ENCODE measurements at regions of chr2 and their contacts with region 1.

Region 1: GRCh38 chr2:226799181-226799975 is at the start of gene IRS1:
- DNase-seq: peak; percentile 59
- ATAC-seq: peak; percentile 47
- H3K4me3 Mint-ChIP-seq: peak within 1 kb of the TSS; percentile 92
- H3K27ac Mint-ChIP-seq: peak within 1 kb of the TSS; percentile 77
- H3K4me1 Mint-ChIP-seq: peaks cover 38% of the 10 kb centered on the region
- H3K27me3 Mint-ChIP-seq: peaks cover under 1% of the 10 kb centered on the region
- CTCF ChIP-seq: no peak
- total RNA-seq, gene IRS1: 3.2 and 3.6 TPM in 2 replicates

Region 2: GRCh38 chr2:225668606-225669266 is 1130.6 kb before region 1 on chr2:
- CTCF ChIA-PET with region 1: interaction called, 15 read pairs
- POLR2A ChIA-PET with region 1: no interaction called
- intact Hi-C with region 1: loop called (anchors 1 kb)
- DNase-seq: no peak
- ATAC-seq: peak; percentile 79
- H3K4me3 Mint-ChIP-seq: no peak overlapping the region
- H3K27ac Mint-ChIP-seq: no peak overlapping the region
- H3K4me1 Mint-ChIP-seq: no peaks in the 10 kb centered on the region
- H3K27me3 Mint-ChIP-seq: peaks cover 5% of the 10 kb centered on the region
- CTCF ChIP-seq: peak; percentile 29

Region 3: GRCh38 chr2:226030788-226031646 is 768.4 kb before region 1 on chr2:
- CTCF ChIA-PET with region 1: no interaction called
- POLR2A ChIA-PET with region 1: interaction called, 3 read pairs
- intact Hi-C with region 1: loop called (anchors 10 kb)
- DNase-seq: no peak
- ATAC-seq: no peak
- H3K4me3 Mint-ChIP-seq: peak overlapping the region; percentile 70
- H3K27ac Mint-ChIP-seq: no peak overlapping the region
- H3K4me1 Mint-ChIP-seq: peaks cover 17% of the 10 kb centered on the region
- H3K27me3 Mint-ChIP-seq: peaks cover 38% of the 10 kb centered on the region
- CTCF ChIP-seq: no peak

Region 4: GRCh38 chr2:226304308-226304707 is 495.1 kb before region 1 on chr2:
- CTCF ChIA-PET with region 1: interaction called, 3 read pairs
- POLR2A ChIA-PET with region 1: no interaction called
- intact Hi-C with region 1: loop called (anchors 2 kb)
- DNase-seq: no peak
- ATAC-seq: no peak
- H3K4me3 Mint-ChIP-seq: no peak overlapping the region
- H3K27ac Mint-ChIP-seq: no peak overlapping the region
- H3K4me1 Mint-ChIP-seq: peaks cover 20% of the 10 kb centered on the region
- H3K27me3 Mint-ChIP-seq: no peaks in the 10 kb centered on the region
- CTCF ChIP-seq: no peak

Region 5: GRCh38 chr2:226756129-226756528 is 43.2 kb before region 1 on chr2:
- CTCF ChIA-PET with region 1: no interaction called
- POLR2A ChIA-PET with region 1: no interaction called
- intact Hi-C with region 1: no loop called
- DNase-seq: no peak
- ATAC-seq: no peak
- H3K4me3 Mint-ChIP-seq: no peak overlapping the region
- H3K27ac Mint-ChIP-seq: no peak overlapping the region
- H3K4me1 Mint-ChIP-seq: peaks cover 6% of the 10 kb centered on the region
- H3K27me3 Mint-ChIP-seq: no peaks in the 10 kb centered on the region
- CTCF ChIP-seq: no peak

Region 6: DNA sequence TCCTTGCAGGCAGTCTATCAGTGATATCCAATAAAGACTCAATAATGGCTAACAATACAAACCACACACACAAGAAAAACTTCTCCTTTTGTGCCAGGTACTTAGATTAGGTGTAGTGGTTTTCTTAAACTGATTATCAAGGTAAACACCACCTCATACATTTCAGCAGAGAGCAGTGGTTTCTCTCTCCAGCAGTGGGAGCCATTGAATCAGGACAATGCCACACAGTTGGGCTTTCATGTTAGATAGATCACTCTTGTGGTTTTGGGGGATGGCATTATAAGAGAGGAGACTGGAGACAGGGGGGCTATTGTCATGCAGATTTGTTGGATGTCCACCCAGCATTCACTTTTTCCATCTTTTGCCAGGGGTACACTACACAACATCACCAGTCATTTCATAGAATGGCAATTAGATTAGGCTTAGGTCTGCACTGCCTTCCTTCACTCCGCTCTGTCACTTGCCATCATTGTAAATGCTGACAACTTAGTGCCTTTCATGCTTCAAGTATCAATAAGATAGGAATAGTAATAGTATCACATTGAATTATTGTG is 13.8 kb after region 1 on chr2:
- CTCF ChIA-PET with region 1: interaction called, 9 read pairs
- POLR2A ChIA-PET with region 1: interaction called, 3 read pairs
- intact Hi-C with region 1: loop called (anchors 1 kb)
- DNase-seq: no peak
- ATAC-seq: no peak
- H3K4me3 Mint-ChIP-seq: no peak overlapping the region
- H3K27ac Mint-ChIP-seq: no peak overlapping the region
- H3K4me1 Mint-ChIP-seq: no peaks in the 10 kb centered on the region
- H3K27me3 Mint-ChIP-seq: peaks cover 20% of the 10 kb centered on the region
- CTCF ChIP-seq: no peak

Region 7: DNA sequence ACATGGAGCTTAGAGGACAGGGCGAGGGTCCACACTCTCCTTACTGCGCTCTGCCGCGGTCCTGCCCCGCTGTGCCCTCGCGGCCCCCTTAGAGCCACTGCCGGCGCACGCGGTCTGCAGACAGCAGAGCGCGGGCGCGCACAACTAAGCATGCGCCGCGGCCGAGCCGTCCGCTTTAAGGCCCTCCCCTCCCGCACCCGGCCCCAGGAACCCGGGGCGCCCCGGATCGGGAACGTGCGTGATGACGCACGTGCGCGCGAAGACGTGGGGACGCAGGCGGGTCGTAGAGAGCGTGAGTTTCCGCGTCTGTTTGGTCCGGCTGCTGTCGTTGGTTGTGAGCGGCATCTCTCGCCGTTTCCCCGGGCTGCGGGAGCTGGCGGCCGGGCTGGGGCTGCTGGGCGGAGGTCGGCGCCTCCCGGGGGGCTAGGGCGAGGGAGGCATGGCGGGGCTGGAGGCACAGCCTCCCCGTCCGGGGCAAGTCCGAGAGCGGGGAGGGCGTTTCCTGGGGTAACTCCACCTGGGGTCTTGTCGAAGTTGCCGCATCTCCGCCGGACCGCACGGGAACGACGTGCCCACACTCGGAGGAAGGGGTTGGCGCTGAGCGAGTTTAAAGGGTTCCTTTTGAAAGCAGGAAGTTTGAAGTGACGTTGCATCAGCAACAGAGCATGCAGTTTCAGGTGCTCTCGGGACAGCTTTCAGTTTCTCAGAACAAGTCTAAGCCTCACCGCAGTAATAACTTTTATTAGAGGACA is 36.6 kb after region 1 on chr2 and contains the start of gene RHBDD1:
- CTCF ChIA-PET with region 1: interaction called, 10 read pairs
- POLR2A ChIA-PET with region 1: interaction called, 34 read pairs
- intact Hi-C with region 1: loop called (anchors 1 kb)
- DNase-seq: peak; percentile 93
- ATAC-seq: peak; percentile 86
- H3K4me3 Mint-ChIP-seq: peak within 1 kb of the TSS; percentile 90
- H3K27ac Mint-ChIP-seq: peak within 1 kb of the TSS; percentile 97
- H3K4me1 Mint-ChIP-seq: peaks cover 69% of the 10 kb centered on the region
- H3K27me3 Mint-ChIP-seq: no peaks in the 10 kb centered on the region
- CTCF ChIP-seq: no peak
- total RNA-seq, gene RHBDD1: 71.1 and 90.2 TPM in 2 replicates

Region 8: DNA sequence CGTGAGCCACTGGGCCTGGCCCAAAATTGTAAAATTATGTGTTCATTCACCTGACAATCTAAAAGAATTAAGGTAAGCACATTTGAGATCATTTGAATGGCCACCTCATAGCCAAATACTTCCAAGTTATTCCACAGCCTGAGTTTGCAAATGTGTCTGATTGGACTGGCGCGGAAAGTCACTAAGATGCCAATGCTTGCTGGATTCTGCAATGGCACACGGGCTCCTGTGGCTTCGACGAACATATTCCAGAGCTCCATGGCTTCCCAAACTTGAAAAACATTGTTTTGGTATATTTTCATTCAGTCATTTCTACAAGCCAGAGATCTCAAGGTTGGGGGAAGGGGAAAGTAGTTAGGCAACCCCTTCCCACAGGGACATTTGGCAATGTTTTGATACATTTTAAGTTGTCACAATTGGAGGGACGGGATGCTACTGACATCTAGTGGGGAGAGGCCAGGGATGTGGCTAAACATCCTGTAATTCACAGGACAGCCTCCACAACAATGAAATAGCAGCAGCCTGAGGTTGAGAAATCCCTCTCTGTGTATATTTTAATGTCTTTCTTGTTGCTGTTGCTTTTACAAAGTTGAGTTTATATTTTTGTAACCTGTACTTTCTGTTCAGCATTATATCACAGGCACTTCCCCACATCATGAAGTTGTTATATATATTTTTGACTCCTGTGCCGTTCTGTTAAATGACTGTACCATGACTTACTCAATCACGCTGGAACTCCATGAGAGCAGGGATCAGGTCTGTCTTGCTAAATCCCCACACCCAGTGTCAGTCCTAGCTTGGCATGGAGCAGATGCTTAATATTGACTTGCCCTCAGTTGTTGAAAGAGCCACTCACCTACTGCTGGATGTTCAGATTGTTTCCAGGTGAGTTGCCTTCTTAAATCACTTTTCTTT is 307.7 kb after region 1 on chr2:
- CTCF ChIA-PET with region 1: no interaction called
- POLR2A ChIA-PET with region 1: no interaction called
- intact Hi-C with region 1: loop called (anchors 1 kb)
- DNase-seq: no peak
- ATAC-seq: no peak
- H3K4me3 Mint-ChIP-seq: no peak overlapping the region
- H3K27ac Mint-ChIP-seq: no peak overlapping the region
- H3K4me1 Mint-ChIP-seq: no peaks in the 10 kb centered on the region
- H3K27me3 Mint-ChIP-seq: no peaks in the 10 kb centered on the region
- CTCF ChIP-seq: no peak